ENCODE measurements at regions of chr13 and their contacts with region 1.

Region 1: GRCh38 chr13:79995334-79995733 is 345.6 kb downstream of the SPRY2 start:
- ATAC-seq: peak in 7 of 8 experiments; percentile 58 to 100 (median 86)
- H3K4me3 ChIP-seq: no peak overlapping the region
- H3K27ac ChIP-seq: no peak overlapping the region
- H3K4me1 ChIP-seq: peaks cover 0 to 3% of the 10 kb centered on the region in 2 donors

Region 2: GRCh38 chr13:79874396-79875360 is 120.7 kb before region 1 on chr13:
- in situ Hi-C with region 1: loop called in 1 of 9 experiments (anchors 25 kb)
- ATAC-seq: peak in 1 of 8 experiments; percentile 22
- H3K4me3 ChIP-seq: no peak overlapping the region
- H3K27ac ChIP-seq: no peak overlapping the region
- H3K4me1 ChIP-seq: peaks cover 8 to 12% of the 10 kb centered on the region in 2 donors

Region 3: GRCh38 chr13:80173224-80173623 is 177.9 kb after region 1 on chr13:
- in situ Hi-C with region 1: no loop called
- ATAC-seq: no peak
- H3K4me3 ChIP-seq: no peak overlapping the region
- H3K27ac ChIP-seq: no peak overlapping the region
- H3K4me1 ChIP-seq: no peaks in the 10 kb centered on the region

Region 4: GRCh38 chr13:80618781-80619180 is 623.4 kb after region 1 on chr13:
- in situ Hi-C with region 1: no loop called
- ATAC-seq: no peak
- H3K4me3 ChIP-seq: no peak overlapping the region
- H3K27ac ChIP-seq: no peak overlapping the region
- H3K4me1 ChIP-seq: no peaks in the 10 kb centered on the region

Region 5: DNA sequence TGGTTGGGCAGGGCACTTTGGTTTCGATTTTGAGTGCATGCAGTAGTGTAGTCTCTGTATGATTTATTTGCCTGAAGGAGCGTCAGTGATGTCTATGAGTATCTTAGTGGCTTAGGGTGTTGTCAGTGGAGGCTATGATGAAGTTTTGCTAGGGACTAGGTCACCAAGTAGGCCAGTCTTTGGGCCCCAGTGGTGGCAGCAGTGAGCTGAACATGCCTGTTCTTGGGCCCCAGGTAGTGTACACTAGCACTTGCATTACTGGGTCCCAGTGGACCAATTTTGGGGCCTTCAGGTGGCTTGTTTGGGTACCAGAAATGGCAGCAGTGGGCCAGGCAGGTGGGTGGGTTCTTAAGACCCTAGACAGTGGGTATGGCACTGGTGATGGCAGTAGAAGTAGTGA is 944.2 kb after region 1 on chr13:
- in situ Hi-C with region 1: no loop called
- ATAC-seq: no peak
- H3K4me3 ChIP-seq: no peak overlapping the region
- H3K27ac ChIP-seq: no peak overlapping the region
- H3K4me1 ChIP-seq: no peaks in the 10 kb centered on the region